T47D (cell line): ENCODE measurements at regions of chr5 and their contacts with region 1.

Region 1: DNA sequence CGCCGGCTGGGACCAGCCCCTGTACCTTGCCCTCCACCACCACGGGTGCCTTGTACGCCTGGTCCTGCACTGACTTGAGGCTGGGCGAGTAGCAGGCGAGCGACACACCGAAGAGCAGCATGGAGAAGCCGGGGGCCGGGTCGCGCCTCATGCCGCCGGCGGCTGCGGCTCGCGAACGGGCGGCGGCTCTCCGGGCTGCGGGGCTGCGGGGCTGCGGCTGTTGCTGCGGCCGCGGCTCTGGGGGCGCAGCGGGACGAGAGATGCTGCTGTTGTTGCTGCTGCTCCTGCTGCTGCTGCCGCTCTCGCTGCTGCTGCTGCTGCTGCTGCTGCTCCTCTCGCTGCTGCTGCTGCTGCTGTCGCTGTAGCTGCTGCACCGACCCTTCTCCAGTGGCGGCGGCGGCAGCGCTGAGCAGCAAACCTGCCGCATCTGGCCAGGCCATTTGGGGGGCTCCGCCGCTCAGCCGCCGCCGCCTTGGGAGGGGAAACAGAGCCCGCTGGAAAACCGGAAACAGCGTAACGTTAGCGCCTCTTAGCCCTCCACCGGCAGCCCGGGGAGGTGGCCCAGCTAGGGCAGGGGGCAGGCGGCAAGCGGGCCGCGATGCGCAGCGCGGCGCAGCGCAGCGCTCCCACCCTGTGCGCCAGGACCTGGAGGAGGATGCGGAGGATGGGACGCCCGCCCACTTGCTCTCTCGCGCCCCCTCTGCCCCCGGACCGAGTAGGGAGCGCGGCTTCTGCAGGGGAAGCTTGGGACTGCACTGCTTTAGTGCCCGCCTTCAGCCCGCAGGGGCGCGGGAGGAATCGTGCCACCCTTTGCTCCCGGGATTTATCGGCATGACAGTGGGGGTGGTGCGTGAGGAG is at the start of gene NRG2:
- DNase-seq: peak; percentile 55 to 74

Region 2: DNA sequence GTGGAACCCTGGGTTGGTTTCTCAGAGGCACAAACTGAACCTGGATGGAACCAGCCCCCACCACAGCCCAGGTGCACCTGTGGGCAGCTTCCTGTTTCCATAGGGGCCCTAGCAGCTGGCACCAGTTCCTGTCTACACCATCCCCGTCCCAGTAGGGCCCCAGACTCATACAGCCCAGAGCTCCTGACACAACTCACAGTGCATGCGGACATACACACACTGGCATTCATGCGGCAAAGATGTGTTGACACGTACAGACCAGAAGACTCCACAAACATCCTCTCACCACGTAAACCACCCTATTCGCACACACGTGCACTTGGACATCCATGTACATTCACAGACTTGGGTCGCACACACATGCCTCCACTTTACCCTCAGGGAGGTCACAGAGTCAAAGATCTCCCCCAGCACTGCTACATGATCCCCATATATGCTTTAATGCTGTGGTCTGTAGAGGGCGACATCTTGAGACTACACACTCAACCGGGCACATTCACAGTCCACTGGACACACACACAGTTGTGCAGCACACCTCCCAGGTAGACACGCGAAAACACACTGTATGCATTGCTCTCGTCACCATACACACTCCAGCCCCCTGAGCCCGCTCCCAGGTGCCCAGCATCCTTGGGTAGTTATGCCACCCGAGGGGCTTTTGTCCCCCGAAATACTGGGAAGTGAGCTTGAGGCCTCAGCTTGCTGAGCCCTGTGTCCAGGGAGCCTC is 372.3 kb before region 1 on chr5:
- in situ Hi-C with region 1: no loop called
- DNase-seq: peak; percentile 59 to 68

Region 3: GRCh38 chr5:140157032-140157803 is 114.3 kb after region 1 on chr5:
- in situ Hi-C with region 1: loop called (anchors 25 kb)
- DNase-seq: peak; percentile 88

Region 4: GRCh38 chr5:140312067-140312790 is 269.4 kb after region 1 on chr5:
- in situ Hi-C with region 1: no loop called
- DNase-seq: no peak